ENCODE measurements at regions of chrX and their contacts with region 1.

Region 1: DNA sequence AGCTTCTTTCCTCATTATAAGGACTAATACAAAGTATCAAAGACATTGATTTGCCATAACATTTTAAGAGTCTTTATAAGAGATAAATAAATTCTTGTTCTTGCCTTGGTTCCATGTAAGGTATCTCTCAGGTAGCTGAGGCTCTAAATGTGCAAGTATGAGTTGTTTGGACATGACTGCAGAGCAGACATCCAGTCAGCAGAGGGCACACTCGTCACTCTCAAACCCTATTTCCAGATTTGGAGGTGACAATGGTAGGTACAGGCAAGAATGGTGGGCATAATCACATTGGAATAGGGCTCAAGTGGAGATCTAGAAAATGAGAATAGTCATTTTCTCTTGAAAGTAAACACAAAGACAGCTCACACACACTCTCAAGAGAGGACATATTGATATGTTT is 133.3 kb upstream of the ZIC3 start:
- DNase-seq: peak; percentile 55
- H3K4me3 ChIP-seq: no peak overlapping the region
- H3K27ac ChIP-seq: no peak overlapping the region
- H3K4me1 ChIP-seq: no peaks in the 10 kb centered on the region
- H3K27me3 ChIP-seq: peaks cover 7% of the 10 kb centered on the region
- CTCF ChIP-seq: peak; percentile 79

Region 2: GRCh38 chrX:137565921-137566745 is 133.5 kb after region 1 on chrX and contains the start of gene ZIC3:
- CTCF ChIA-PET with region 1: no interaction called
- POLR2A ChIA-PET with region 1: no interaction called
- intact Hi-C with region 1: loop called (anchors 5 kb)
- DNase-seq: peak; percentile 85
- H3K4me3 ChIP-seq: peak within 1 kb of the TSS; percentile 58
- H3K27ac ChIP-seq: peak within 1 kb of the TSS; percentile 64
- H3K4me1 ChIP-seq: peaks cover 32% of the 10 kb centered on the region
- H3K27me3 ChIP-seq: no peaks in the 10 kb centered on the region
- CTCF ChIP-seq: no peak
- total RNA-seq, gene ZIC3: 8.9 and 12.3 TPM in 2 replicates

Region 3: DNA sequence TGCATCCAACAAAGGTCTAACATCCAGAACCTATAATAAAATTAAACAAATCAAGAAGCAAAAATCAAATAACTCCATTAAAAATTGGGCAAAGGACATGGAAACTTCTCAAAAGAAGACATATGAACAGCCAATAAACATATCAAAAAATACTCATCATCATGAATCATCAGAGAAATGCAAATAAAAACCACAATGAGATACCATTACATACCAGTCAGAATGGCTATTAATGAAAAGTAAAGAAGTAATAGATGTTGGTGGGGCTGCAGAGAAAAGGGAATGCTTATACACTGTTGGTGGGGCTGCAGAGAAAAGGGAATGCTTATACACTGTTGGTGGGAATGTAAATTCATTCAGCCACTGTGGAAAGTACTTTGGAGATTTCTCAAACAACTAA is 599.1 kb after region 1 on chrX:
- CTCF ChIA-PET with region 1: no interaction called
- POLR2A ChIA-PET with region 1: no interaction called
- intact Hi-C with region 1: loop called (anchors 2 kb)
- DNase-seq: no peak
- H3K4me3 ChIP-seq: no peak overlapping the region
- H3K27ac ChIP-seq: no peak overlapping the region
- H3K4me1 ChIP-seq: no peaks in the 10 kb centered on the region
- H3K27me3 ChIP-seq: no peaks in the 10 kb centered on the region
- CTCF ChIP-seq: no peak

Region 4: DNA sequence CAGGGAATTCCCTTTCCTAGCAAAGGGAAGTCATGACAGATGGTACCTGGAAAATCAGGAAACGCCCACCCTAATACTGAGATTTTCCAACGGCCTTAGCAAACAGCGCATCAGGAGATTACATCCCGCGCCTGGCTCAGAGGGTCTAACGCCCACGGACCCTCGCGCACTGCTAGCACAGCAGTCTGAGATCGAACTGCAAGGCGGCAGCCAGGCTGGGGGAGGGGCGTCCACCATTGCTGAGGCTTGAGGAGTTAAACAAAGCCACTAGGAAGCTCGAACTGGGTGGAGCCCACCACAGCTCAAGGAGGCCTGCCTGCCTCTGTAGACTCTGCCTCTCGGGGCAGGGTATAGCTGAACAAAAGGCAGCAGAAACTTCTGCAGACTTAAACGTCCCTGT is 641.0 kb after region 1 on chrX:
- CTCF ChIA-PET with region 1: no interaction called
- POLR2A ChIA-PET with region 1: no interaction called
- intact Hi-C with region 1: no loop called
- DNase-seq: no peak
- H3K4me3 ChIP-seq: no peak overlapping the region
- H3K27ac ChIP-seq: no peak overlapping the region
- H3K4me1 ChIP-seq: no peaks in the 10 kb centered on the region
- H3K27me3 ChIP-seq: no peaks in the 10 kb centered on the region
- CTCF ChIP-seq: no peak

Measured in A673 (cell line).